T-cell (primary cell): ENCODE measurements at regions of chr7 and their contacts with region 1.

Region 1: GRCh38 chr7:150642926-150643325 is 10.7 kb upstream of the GIMAP6 start:
- DNase-seq: no peak
- ATAC-seq: no peak
- H3K4me3 ChIP-seq: no peak overlapping the region
- H3K4me3 Mint-ChIP-seq: no peak overlapping the region
- H3K27ac ChIP-seq: no peak overlapping the region
- H3K27ac Mint-ChIP-seq: no peak overlapping the region
- H3K4me1 ChIP-seq: peaks cover 8 to 10% of the 10 kb centered on the region in 2 experiments
- H3K4me1 Mint-ChIP-seq: peaks cover 65 to 76% (median 67%) of the 10 kb centered on the region in 3 donors
- H3K27me3 ChIP-seq: no peaks in the 10 kb centered on the region
- H3K27me3 Mint-ChIP-seq: no peaks in the 10 kb centered on the region

Region 2: DNA sequence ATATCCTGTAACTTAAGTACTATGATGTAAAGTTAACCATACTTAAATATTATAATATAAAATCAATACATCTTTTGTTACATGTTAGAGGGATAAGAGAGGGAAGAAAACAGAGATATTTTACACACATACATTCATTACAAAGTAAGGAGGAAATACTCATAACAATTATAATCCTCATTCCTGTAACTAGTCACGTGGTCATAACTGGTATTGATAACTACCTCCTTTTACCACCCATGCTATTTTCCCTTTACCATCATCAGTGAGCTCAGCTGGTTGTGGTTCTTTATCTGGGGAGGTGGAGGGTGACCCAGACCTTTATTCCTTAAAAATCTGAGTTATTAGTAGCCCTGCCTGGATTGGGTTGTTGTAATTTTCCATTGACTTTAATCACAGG is 184.2 kb before region 1 on chr7:
- CTCF ChIA-PET with region 1: no interaction called
- POLR2A ChIA-PET with region 1: no interaction called
- DNase-seq: no peak
- ATAC-seq: no peak
- H3K4me3 ChIP-seq: no peak overlapping the region
- H3K4me3 Mint-ChIP-seq: no peak overlapping the region
- H3K27ac ChIP-seq: no peak overlapping the region
- H3K27ac Mint-ChIP-seq: peak overlapping the region in 1 of 2 donors; percentile 58
- H3K4me1 ChIP-seq: peaks cover 9 to 31% of the 10 kb centered on the region in 2 experiments
- H3K4me1 Mint-ChIP-seq: peaks cover 66 to 81% (median 75%) of the 10 kb centered on the region in 3 donors
- H3K27me3 ChIP-seq: no peaks in the 10 kb centered on the region
- H3K27me3 Mint-ChIP-seq: no peaks in the 10 kb centered on the region

Region 3: GRCh38 chr7:150553163-150553562 is 89.8 kb before region 1 on chr7:
- CTCF ChIA-PET with region 1: no interaction called
- POLR2A ChIA-PET with region 1: interaction called in 1 of 2 experiments, 18 read pairs
- DNase-seq: no peak
- ATAC-seq: no peak
- H3K4me3 ChIP-seq: no peak overlapping the region
- H3K4me3 Mint-ChIP-seq: peak overlapping the region in 1 of 3 donors; percentile 75
- H3K27ac ChIP-seq: peak overlapping the region; percentile 50
- H3K27ac Mint-ChIP-seq: peak overlapping the region; percentile 96 to 100
- H3K4me1 ChIP-seq: peaks cover 11 to 29% of the 10 kb centered on the region in 2 experiments
- H3K4me1 Mint-ChIP-seq: peaks cover 65 to 75% (median 73%) of the 10 kb centered on the region in 3 donors
- H3K27me3 ChIP-seq: no peaks in the 10 kb centered on the region
- H3K27me3 Mint-ChIP-seq: no peaks in the 10 kb centered on the region

Region 4: GRCh38 chr7:150567169-150567568 is 75.8 kb before region 1 on chr7 and contains the start of gene GIMAP4:
- CTCF ChIA-PET with region 1: no interaction called
- POLR2A ChIA-PET with region 1: no interaction called
- DNase-seq: peak in 10 of 35 experiments; percentile 6 to 57 (median 16)
- ATAC-seq: peak; percentile 35 to 59 (median 50)
- H3K4me3 ChIP-seq: peak within 1 kb of the TSS; percentile 88 to 98
- H3K4me3 Mint-ChIP-seq: peak within 1 kb of the TSS; percentile 87 to 99 (median 99)
- H3K27ac ChIP-seq: peak within 1 kb of the TSS; percentile 68
- H3K27ac Mint-ChIP-seq: peak within 1 kb of the TSS; percentile 100
- H3K4me1 ChIP-seq: peaks cover 36 to 58% of the 10 kb centered on the region in 2 experiments
- H3K4me1 Mint-ChIP-seq: peaks cover 75 to 81% (median 80%) of the 10 kb centered on the region in 3 donors
- H3K27me3 ChIP-seq: no peaks in the 10 kb centered on the region
- H3K27me3 Mint-ChIP-seq: no peaks in the 10 kb centered on the region
- total RNA-seq, gene GIMAP4: 121 to 341 (median 306) TPM